Posterior vena cava (tissue), 2 donors: ENCODE measurements at regions of chr9 and their contacts with region 1.

Region 1: GRCh38 chr9:19493174-19493811 is 84.5 kb downstream of the ACER2 start:
- DNase-seq: peak; percentile 94

Region 2: GRCh38 chr9:19641046-19641445 is 147.8 kb after region 1 on chr9:
- intact Hi-C with region 1: loop called in 1 of 2 experiments (anchors 5 kb)
- DNase-seq: no peak

Region 3: DNA sequence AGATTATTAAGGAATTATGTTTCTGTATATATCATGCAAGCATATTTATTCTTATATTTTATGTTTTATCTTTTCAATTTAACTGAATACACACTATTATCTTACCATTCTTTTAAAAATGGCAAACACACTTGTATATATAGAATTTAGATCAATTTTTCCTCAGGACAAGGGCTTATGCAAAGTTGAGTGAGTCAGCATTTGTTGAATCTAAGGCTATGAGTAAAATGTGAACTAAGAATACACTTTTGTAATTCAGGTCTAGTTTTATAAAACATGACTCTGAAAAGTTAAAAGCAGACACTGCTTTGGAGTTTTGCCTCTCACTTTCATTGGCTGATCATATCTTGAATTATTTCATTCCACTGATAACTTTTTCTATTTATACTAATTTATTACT is 1318.6 kb after region 1 on chr9:
- intact Hi-C with region 1: no loop called
- DNase-seq: no peak